Gastrocnemius medialis (tissue), 4 donors: ENCODE measurements at regions of chr4 and their contacts with region 1.

Region 1: DNA sequence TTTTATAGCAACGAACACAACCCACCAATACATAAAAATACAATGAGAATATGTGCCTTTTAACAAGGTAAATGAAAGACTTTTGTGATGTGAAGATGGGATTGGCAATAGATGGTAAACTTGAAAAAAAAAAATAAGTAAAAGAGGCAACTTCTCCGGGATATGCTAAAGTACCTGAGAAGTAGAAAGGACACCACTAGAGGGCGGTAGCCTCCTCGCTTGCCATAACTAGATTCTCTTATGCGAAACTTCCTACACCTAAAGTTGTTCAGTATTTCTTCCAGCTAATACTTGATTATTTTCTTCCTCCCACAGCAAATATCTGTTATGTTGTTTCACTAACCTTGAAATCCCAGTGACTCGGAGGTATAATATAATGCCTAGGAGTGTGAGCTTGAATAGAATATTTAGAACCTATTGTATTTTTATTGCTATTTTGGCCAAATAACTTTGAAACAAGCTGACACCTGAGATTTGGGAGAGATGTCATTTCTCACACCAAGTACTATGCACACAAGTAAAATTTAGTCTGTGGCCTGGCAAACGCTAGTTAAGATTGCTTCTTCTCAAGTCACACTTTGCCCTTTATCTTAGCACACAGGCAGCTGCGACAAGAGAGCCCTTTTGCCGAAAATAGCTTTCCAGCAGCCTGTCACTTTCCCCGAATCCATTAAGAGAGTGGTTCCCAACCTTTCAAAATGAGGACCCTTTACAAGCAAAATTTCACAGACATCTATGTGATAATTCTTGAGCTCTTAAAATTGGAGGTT is 44.9 kb upstream of the PDLIM5 start:
- DNase-seq: peak; percentile 65 to 79
- ATAC-seq: peak; percentile 49 to 56
- H3K4me3 ChIP-seq: peak overlapping the region; percentile 23 to 29 (median 26)
- H3K27ac ChIP-seq: peak overlapping the region; percentile 87 to 94 (median 88)
- H3K4me1 ChIP-seq: peaks cover 34 to 36% of the 10 kb centered on the region in 2 donors
- H3K27me3 ChIP-seq: no peaks in the 10 kb centered on the region
- CTCF ChIP-seq: peak; percentile 71 to 92 (median 78)
- POLR2A ChIP-seq: no peak

Region 2: GRCh38 chr4:94207469-94208224 is 199.2 kb before region 1 on chr4 and contains the start of gene SMARCAD1:
- in situ Hi-C with region 1: no loop called
- intact Hi-C with region 1: loop called (anchors 5 kb)
- DNase-seq: peak; percentile 73 to 83
- ATAC-seq: peak; percentile 97 to 98
- H3K4me3 ChIP-seq: peak within 1 kb of the TSS; percentile 86 to 99 (median 96)
- H3K27ac ChIP-seq: peak within 1 kb of the TSS; percentile 88 to 98 (median 96)
- H3K4me1 ChIP-seq: peaks cover 23 to 27% of the 10 kb centered on the region in 2 donors
- H3K27me3 ChIP-seq: no peaks in the 10 kb centered on the region
- CTCF ChIP-seq: peak in 1 of 5 experiments; percentile 12
- POLR2A ChIP-seq: peak; percentile 21 to 29
- total RNA-seq, gene SMARCAD1: 5.7 to 16.9 (median 8.0) TPM

Region 3: DNA sequence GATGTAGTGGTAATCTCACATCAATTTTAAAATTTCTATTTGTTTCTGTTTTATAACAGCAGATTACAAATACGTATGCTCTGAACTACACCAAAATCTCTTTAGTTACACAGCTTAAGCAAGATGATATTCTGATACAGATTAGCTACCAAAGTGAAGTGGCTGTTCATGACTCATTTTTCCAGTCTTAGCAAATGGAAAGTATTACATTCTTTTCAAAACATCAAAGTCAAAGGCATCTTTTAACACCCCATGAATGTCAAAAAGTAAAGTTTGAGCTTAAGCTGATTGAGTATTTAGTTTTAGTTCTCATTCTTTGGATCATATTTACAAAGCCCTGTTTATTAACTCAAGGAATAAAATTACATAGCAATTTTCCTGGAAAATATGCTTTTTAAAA is 57.7 kb before region 1 on chr4:
- in situ Hi-C with region 1: no loop called
- intact Hi-C with region 1: no loop called
- DNase-seq: no peak
- ATAC-seq: no peak
- H3K4me3 ChIP-seq: no peak overlapping the region
- H3K27ac ChIP-seq: no peak overlapping the region
- H3K4me1 ChIP-seq: no peaks in the 10 kb centered on the region
- H3K27me3 ChIP-seq: no peaks in the 10 kb centered on the region
- CTCF ChIP-seq: no peak
- POLR2A ChIP-seq: no peak

Region 4: DNA sequence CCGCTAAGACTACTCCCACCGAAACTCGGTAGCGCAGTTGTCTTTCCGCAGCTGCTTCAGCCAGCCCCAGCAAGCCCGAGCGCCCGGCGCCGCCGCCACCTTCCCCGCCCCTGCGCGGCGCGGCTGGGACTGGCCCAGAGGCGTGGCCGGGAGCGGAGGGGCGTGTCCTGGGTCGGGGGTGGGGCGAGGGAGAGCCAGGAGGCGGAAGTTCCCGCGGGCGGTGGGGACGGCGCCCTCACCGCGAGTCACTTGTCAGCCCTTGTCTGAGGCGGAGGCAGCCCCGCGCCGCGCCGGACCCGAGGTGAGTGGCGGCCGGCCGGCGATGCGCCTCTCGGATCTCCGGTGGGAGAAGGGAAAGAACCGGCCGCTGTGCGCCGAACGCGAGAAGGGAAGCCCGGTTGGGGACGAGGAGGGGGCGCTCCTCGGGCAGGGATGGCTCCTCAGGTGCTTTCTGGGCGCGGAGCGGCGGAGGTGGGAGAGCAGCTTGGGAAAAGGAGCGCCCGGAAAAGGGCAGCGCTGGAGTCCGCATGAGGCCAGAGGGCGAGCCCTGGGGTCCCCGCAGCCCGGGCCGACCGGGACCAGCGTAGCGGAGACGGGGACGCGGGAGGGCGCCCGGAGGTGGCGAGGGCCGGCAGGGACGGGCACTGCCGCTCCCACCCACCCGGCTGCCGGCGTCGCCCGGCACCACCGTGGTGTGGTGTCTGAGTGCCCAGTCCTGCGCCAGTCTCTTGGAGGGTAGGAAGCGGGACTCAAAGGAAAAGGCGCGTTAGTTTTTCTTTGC is 45.0 kb after region 1 on chr4 and contains the start of gene PDLIM5:
- in situ Hi-C with region 1: no loop called
- intact Hi-C with region 1: loop called (anchors 2 kb)
- DNase-seq: peak; percentile 88 to 92
- ATAC-seq: peak; percentile 74 to 78
- H3K4me3 ChIP-seq: peak within 1 kb of the TSS; percentile 81 to 96 (median 90)
- H3K27ac ChIP-seq: peak within 1 kb of the TSS; percentile 93 to 99 (median 99)
- H3K4me1 ChIP-seq: peaks cover 28 to 43% of the 10 kb centered on the region in 2 donors
- H3K27me3 ChIP-seq: no peaks in the 10 kb centered on the region
- CTCF ChIP-seq: no peak
- POLR2A ChIP-seq: peak; percentile 99
- total RNA-seq, gene PDLIM5: 473 to 833 (median 673) TPM

Region 5: GRCh38 chr4:94484818-94485217 is 78.0 kb after region 1 on chr4:
- in situ Hi-C with region 1: no loop called
- intact Hi-C with region 1: loop called (anchors 2 kb)
- DNase-seq: no peak
- ATAC-seq: peak; percentile 9 to 13
- H3K4me3 ChIP-seq: no peak overlapping the region
- H3K27ac ChIP-seq: peak overlapping the region; percentile 86 to 99 (median 96)
- H3K4me1 ChIP-seq: peaks cover 83 to 87% of the 10 kb centered on the region in 2 donors
- H3K27me3 ChIP-seq: no peaks in the 10 kb centered on the region
- CTCF ChIP-seq: no peak
- POLR2A ChIP-seq: no peak

Region 6: DNA sequence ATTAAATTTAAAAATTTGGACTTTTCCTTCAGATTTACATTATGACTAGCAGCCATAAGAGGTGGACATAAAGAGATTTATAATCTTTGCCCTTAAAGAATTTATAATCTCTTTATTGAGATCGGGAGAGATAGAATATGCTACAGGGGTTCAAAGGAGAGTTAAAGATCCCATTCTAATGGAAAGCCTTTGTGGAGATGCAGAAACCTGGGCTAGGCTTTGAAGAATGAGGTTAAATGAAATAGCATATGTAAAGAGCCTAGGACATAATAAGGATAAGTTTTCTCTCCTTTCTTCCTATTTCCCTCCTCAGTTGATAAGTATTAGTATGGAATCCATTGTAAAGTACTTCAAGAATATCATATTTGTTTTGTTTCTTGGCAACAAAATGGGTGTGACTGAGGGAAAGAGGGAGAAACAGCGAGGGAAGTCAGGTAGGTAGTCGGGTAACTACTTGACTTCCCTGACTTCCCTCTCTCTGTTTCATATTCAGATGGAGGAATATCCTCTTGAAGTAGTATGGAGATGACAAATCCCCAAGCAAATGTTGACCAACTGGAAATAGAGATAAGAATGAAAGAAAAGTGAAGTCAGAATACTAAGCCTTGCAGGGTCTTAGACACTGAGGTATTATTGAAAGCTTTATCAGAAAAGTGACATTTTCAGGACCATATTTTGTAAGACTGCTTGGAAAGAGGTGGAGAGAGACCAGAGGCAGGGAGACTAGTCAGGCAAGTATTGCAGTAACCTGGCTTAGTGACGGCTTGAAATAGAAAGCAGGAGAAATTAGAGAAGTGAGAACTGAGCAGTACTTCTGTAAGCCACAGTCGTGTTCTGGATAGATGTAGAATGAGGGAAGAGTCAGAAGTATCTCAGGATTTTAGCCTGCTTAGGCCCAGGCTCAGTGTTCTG is 127.8 kb after region 1 on chr4:
- in situ Hi-C with region 1: no loop called
- intact Hi-C with region 1: loop called (anchors 5 kb)
- DNase-seq: no peak
- ATAC-seq: peak; percentile 78 to 90
- H3K4me3 ChIP-seq: peak overlapping the region in 1 of 4 donors; percentile 3
- H3K27ac ChIP-seq: peak overlapping the region; percentile 68 to 85 (median 82)
- H3K4me1 ChIP-seq: peaks cover 95 to 100% of the 10 kb centered on the region in 2 donors
- H3K27me3 ChIP-seq: no peaks in the 10 kb centered on the region
- CTCF ChIP-seq: no peak
- POLR2A ChIP-seq: no peak

Region 7: DNA sequence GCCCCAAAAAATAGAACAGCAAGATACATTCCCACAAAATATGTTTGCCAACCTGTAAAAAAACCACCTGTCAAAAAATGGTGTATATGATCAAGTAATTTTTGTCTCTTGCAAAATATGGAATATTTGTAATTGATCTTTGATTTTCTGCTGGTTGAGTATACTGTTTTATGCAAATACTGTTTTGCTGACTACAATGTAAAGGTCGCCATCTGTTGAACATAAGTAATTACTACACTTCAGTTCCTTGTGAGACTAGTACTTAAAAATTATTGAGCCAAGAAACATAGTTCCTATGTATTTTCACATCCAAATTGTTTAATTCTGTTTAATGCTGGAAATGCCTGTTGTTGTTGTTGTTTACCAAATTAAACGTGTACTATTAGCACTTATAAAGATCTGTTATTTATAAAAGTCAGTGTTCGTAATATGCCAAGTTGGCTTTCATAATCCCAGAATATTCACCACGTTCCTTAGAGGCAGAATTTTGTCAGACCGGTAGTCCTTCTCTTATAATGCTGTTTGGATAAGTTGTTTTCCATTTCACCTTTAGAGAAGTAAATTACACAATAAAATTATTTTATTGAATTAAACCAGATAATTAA is 189.1 kb after region 1 on chr4:
- in situ Hi-C with region 1: loop called (anchors 5 to 10 kb)
- intact Hi-C with region 1: loop called (anchors 1 kb)
- DNase-seq: no peak
- ATAC-seq: peak in 1 of 2 donors; percentile 41
- H3K4me3 ChIP-seq: no peak overlapping the region
- H3K27ac ChIP-seq: peak overlapping the region; percentile 53 to 75 (median 66)
- H3K4me1 ChIP-seq: peaks cover 8 to 9% of the 10 kb centered on the region in 2 donors
- H3K27me3 ChIP-seq: no peaks in the 10 kb centered on the region
- CTCF ChIP-seq: peak; percentile 55 to 89 (median 64)
- POLR2A ChIP-seq: no peak

Region 8: GRCh38 chr4:94621491-94622080 is 214.7 kb after region 1 on chr4:
- in situ Hi-C with region 1: no loop called
- intact Hi-C with region 1: no loop called
- DNase-seq: no peak
- ATAC-seq: no peak
- H3K4me3 ChIP-seq: no peak overlapping the region
- H3K27ac ChIP-seq: no peak overlapping the region
- H3K4me1 ChIP-seq: peaks cover 0 to 4% of the 10 kb centered on the region in 2 donors
- H3K27me3 ChIP-seq: no peaks in the 10 kb centered on the region
- CTCF ChIP-seq: peak; percentile 45 to 76 (median 69)
- POLR2A ChIP-seq: no peak

Region 9: DNA sequence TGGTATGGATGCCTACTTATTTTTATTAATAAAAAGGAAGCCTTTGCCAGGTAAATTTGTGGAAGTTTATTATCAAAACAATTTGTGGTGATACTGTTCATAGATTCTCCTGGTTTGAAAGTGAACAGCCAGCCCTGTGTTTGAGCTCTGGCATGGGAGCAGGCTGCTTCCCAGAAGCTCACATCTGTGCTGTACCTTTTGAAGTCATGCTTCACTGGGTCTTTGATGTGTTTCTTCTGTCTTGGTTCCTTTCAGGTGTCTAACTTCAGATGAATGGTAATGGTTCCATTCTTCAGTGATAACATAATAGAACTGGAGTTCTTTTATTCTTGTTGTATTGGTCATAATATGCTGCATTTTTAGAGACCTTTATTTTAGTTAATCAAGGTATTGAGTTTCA is 436.4 kb after region 1 on chr4:
- in situ Hi-C with region 1: no loop called
- intact Hi-C with region 1: no loop called
- DNase-seq: no peak
- ATAC-seq: no peak
- H3K4me3 ChIP-seq: no peak overlapping the region
- H3K27ac ChIP-seq: no peak overlapping the region
- H3K4me1 ChIP-seq: no peaks in the 10 kb centered on the region
- H3K27me3 ChIP-seq: no peaks in the 10 kb centered on the region
- CTCF ChIP-seq: no peak
- POLR2A ChIP-seq: no peak